GM12878 (cell line): ENCODE measurements at regions of chr4 and their contacts with region 1.

Region 1: DNA sequence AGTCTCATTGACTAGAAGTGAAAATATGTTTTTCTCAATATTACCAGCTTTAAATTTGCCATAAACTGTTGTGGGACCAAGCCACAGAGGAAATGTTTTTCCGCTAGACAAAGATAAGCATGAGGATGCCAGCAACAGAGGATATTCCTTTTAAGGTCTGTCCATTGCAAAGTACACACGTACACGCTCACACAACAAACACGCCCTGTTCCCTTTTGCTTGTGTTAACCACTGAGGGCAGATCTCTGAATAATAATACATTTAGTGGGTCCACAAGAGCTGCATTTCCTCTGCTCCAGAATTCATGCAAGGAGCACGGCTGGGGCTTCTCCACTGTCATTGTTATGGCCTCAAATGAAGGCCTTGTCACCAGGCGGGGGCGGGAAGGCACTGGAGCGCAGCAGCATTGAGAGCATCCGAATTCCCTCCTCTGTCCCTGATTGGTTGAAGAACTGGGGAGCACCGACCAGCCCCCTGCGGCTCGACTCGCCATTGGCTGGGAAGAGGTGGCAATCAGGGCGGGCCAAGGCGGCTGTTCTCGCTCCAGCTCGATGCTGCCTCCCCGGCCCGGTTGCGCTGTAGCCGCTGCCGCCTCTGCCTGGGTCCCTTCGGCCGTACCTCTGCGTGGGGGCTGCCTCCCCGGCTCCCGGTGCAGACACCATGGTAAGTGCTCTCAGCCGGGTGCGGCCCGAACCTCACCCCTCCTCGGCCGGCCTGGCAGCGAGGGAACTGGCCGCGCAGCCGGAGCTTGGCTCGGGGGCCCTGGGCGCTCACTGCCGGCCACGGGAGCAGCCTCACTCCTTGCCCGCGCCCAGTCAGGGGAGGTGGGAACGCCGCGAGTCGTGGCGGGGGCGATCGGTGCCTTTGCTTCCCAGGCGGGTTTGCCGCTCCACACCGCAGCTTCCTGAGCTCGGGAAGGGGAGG is at the start of gene GUCY1B1:
- DNase-seq: peak; percentile 44
- ATAC-seq: peak; percentile 96
- H3K4me3 ChIP-seq: 0 out of 2 replicates have a peak within 1 kb of the TSS, but pooled peaks have one; percentile 44
- H3K27ac ChIP-seq: no peak within 1 kb of the TSS
- H3K4me1 ChIP-seq: no peaks in the 10 kb centered on the region
- H3K27me3 ChIP-seq: peaks cover 0 to 7% of the 10 kb centered on the region in 2 experiments; a peak in 2 of 4 replicates
- CTCF ChIP-seq: peak; percentile 13 to 40 (median 24); a peak in 4 of 6 replicates
- EP300 ChIP-seq: 0 out of 4 replicates have a peak, but pooled peaks of 1 of the 2 experiments have one; percentile 13
- POLR2A ChIP-seq: peak; percentile 61; the same call in 1 of the 2 replicates
- RAD21 ChIP-seq: no peak
- polyA plus RNA-seq, gene GUCY1B1: 0.60 to 1.1 TPM

Region 2: GRCh38 chr4:155179216-155179615 is 579.5 kb before region 1 on chr4:
- CTCF ChIA-PET with region 1: no interaction called
- POLR2A ChIA-PET with region 1: no interaction called
- RAD21 ChIA-PET with region 1: no interaction called
- SMC1A ChIA-PET with region 1: no interaction called
- in situ Hi-C with region 1: no loop called
- intact Hi-C with region 1: no loop called
- DNase-seq: no peak
- ATAC-seq: no peak
- H3K4me3 ChIP-seq: no peak overlapping the region
- H3K27ac ChIP-seq: no peak overlapping the region
- H3K4me1 ChIP-seq: no peaks in the 10 kb centered on the region
- H3K27me3 ChIP-seq: no peaks in the 10 kb centered on the region
- CTCF ChIP-seq: no peak
- EP300 ChIP-seq: no peak
- POLR2A ChIP-seq: no peak
- RAD21 ChIP-seq: no peak

Region 3: GRCh38 chr4:155667568-155668511 is 90.9 kb before region 1 on chr4:
- CTCF ChIA-PET with region 1: interaction called, 6 read pairs
- POLR2A ChIA-PET with region 1: interaction called, 16 read pairs
- RAD21 ChIA-PET with region 1: interaction called, 55 read pairs
- SMC1A ChIA-PET with region 1: interaction called, 23 read pairs
- in situ Hi-C with region 1: no loop called
- intact Hi-C with region 1: loop called (anchors 5 kb)
- DNase-seq: no peak
- ATAC-seq: peak; percentile 71
- H3K4me3 ChIP-seq: peak overlapping the region; percentile 41
- H3K27ac ChIP-seq: no peak overlapping the region
- H3K4me1 ChIP-seq: no peaks in the 10 kb centered on the region; the same call in 1 of the 2 replicates
- H3K27me3 ChIP-seq: peaks cover 4 to 21% of the 10 kb centered on the region in 2 experiments; a peak in 3 of 4 replicates
- CTCF ChIP-seq: no peak
- EP300 ChIP-seq: no peak
- POLR2A ChIP-seq: peak; percentile 41; the same call in 1 of the 2 replicates
- RAD21 ChIP-seq: no peak

Region 4: DNA sequence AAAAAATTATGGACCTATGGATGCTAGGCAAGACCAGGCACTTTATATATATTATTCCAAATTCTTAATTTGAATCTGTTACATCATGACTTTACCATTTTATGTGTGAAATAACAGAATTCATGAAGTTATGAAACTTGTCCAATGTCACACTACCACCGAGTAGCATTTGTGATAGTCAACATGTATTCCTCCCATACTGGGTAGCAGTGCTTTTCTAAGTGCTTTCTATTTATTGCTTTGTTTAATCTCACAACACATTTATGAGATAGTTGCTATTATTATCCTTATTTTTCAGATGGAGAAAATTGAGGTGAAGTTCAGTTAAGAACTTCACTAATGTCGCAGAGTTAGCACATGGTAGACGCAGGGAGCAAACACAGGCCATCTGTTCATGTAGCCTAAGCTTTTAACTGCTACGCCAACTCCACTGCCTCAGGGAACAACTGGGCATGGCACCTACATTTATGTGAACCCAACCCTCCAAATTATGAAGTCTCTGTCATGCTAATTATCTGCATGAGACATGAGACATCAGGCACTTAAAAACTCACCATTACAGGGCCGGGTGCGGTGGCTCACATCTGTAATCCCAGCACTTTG is 71.3 kb before region 1 on chr4:
- CTCF ChIA-PET with region 1: interaction called, 3 read pairs
- POLR2A ChIA-PET with region 1: interaction called, 6 read pairs
- RAD21 ChIA-PET with region 1: interaction called, 10 read pairs
- SMC1A ChIA-PET with region 1: interaction called, 3 read pairs
- in situ Hi-C with region 1: no loop called
- intact Hi-C with region 1: no loop called
- DNase-seq: no peak
- ATAC-seq: no peak
- H3K4me3 ChIP-seq: no peak overlapping the region
- H3K27ac ChIP-seq: no peak overlapping the region
- H3K4me1 ChIP-seq: no peaks in the 10 kb centered on the region
- H3K27me3 ChIP-seq: no peaks in the 10 kb centered on the region
- CTCF ChIP-seq: no peak
- EP300 ChIP-seq: no peak
- POLR2A ChIP-seq: no peak
- RAD21 ChIP-seq: no peak

Region 5: GRCh38 chr4:155705664-155706063 is 53.1 kb before region 1 on chr4:
- CTCF ChIA-PET with region 1: interaction called, 4 read pairs
- POLR2A ChIA-PET with region 1: interaction called, 18 read pairs
- RAD21 ChIA-PET with region 1: interaction called, 18 read pairs
- SMC1A ChIA-PET with region 1: interaction called, 15 read pairs
- in situ Hi-C with region 1: no loop called
- intact Hi-C with region 1: loop called (anchors 5 kb)
- DNase-seq: no peak
- ATAC-seq: no peak
- H3K4me3 ChIP-seq: no peak overlapping the region
- H3K27ac ChIP-seq: no peak overlapping the region
- H3K4me1 ChIP-seq: no peaks in the 10 kb centered on the region
- H3K27me3 ChIP-seq: no peaks in the 10 kb centered on the region
- CTCF ChIP-seq: no peak
- EP300 ChIP-seq: no peak
- POLR2A ChIP-seq: no peak
- RAD21 ChIP-seq: no peak

Region 6: GRCh38 chr4:155748039-155748438 is 10.7 kb before region 1 on chr4:
- CTCF ChIA-PET with region 1: interaction called, 14 read pairs
- POLR2A ChIA-PET with region 1: no interaction called
- RAD21 ChIA-PET with region 1: interaction called, 5 read pairs
- SMC1A ChIA-PET with region 1: interaction called, 5 read pairs
- in situ Hi-C with region 1: no loop called
- intact Hi-C with region 1: no loop called
- DNase-seq: no peak
- ATAC-seq: no peak
- H3K4me3 ChIP-seq: no peak overlapping the region
- H3K27ac ChIP-seq: no peak overlapping the region
- H3K4me1 ChIP-seq: no peaks in the 10 kb centered on the region
- H3K27me3 ChIP-seq: no peaks in the 10 kb centered on the region
- CTCF ChIP-seq: no peak
- EP300 ChIP-seq: no peak
- POLR2A ChIP-seq: no peak
- RAD21 ChIP-seq: no peak

Region 7: DNA sequence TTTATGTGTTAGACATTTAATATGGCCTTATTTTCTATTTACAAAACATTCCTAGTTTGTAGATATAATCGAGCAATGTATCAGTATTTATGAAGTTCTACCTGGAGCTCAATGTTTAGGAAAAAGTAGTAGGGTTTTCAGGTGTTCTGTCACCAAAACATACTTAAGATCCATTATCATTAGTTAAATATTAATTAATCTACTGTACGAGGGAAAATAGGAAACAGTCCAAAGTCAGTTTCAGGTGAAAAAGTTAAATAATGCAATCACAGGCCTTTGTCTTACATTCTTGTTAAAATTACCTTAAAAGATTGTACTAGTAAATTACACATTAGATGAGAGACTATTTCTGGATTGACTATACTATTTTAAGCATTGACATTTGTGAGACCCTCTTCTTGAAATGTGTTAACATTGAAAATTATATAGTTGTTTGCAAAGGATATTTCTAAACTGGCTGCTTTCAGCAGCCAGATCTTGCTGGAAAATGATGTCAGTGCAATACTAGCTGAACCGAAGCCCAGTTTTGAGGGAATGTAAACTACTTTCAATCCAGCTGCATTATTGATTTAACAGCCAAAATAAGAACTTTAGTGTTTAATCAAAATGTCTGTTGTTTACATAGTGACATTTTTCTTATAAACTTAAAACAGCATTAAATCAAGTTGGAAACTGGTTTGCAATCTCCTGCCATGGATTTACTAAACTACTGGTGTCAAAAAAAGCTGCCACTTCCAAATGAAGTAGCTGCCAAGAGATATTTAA is 19.4 kb after region 1 on chr4:
- CTCF ChIA-PET with region 1: interaction called, 9 read pairs
- POLR2A ChIA-PET with region 1: interaction called, 7 read pairs
- RAD21 ChIA-PET with region 1: interaction called, 10 read pairs
- SMC1A ChIA-PET with region 1: interaction called, 16 read pairs
- in situ Hi-C with region 1: no loop called
- intact Hi-C with region 1: no loop called
- DNase-seq: no peak
- ATAC-seq: no peak
- H3K4me3 ChIP-seq: no peak overlapping the region
- H3K27ac ChIP-seq: no peak overlapping the region
- H3K4me1 ChIP-seq: no peaks in the 10 kb centered on the region
- H3K27me3 ChIP-seq: no peaks in the 10 kb centered on the region
- CTCF ChIP-seq: no peak
- EP300 ChIP-seq: no peak
- POLR2A ChIP-seq: no peak
- RAD21 ChIP-seq: no peak

Region 8: DNA sequence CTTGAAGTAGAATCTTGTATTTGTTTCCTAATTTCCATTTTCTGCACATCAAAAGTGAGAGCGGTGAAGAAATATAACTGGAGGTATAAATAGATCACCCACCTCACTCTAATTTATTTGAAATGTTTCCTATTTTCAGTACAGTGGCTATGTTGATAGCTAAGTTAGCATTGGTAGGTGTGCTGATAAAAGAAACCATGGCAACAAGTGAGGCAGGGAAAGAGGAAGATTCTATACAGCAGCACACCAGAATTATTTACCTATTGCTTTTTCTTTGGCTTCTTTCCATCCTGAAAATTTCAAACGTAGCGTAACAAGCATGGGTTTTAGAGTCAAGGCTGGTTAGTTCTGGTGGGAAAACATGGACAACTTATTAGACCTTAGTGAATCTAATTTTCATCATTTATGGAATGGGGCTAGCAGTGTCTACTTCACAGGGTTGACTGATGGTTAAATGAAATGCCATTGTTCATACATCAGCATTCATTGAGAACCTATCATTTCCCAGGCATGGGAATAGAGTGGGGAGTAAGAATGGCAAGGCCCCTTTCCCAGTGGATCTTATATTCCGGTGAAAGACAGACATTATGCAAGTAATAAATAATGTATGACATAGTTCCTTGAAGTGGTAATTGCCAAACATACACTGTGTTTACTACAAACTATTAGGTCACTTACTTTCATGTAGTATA is 225.5 kb after region 1 on chr4:
- CTCF ChIA-PET with region 1: no interaction called
- POLR2A ChIA-PET with region 1: no interaction called
- RAD21 ChIA-PET with region 1: no interaction called
- SMC1A ChIA-PET with region 1: no interaction called
- in situ Hi-C with region 1: no loop called
- intact Hi-C with region 1: no loop called
- DNase-seq: no peak
- ATAC-seq: no peak
- H3K4me3 ChIP-seq: no peak overlapping the region
- H3K27ac ChIP-seq: no peak overlapping the region
- H3K4me1 ChIP-seq: no peaks in the 10 kb centered on the region
- H3K27me3 ChIP-seq: no peaks in the 10 kb centered on the region
- CTCF ChIP-seq: no peak
- EP300 ChIP-seq: no peak
- POLR2A ChIP-seq: no peak
- RAD21 ChIP-seq: no peak